ENCODE measurements at regions of chr18 and their contacts with region 1.

Region 1: GRCh38 chr18:76697441-76697901 is 124.9 kb upstream of the ZNF236 start:
- H3K4me3 ChIP-seq: no peak overlapping the region
- H3K27ac ChIP-seq: no peak overlapping the region
- H3K4me1 ChIP-seq: no peaks in the 10 kb centered on the region
- CTCF ChIP-seq: no peak

Region 2: GRCh38 chr18:76679259-76679658 is 18.2 kb before region 1 on chr18:
- CTCF ChIA-PET with region 1: interaction called, 3 read pairs
- POLR2A ChIA-PET with region 1: interaction called, 12 read pairs
- H3K4me3 ChIP-seq: no peak overlapping the region
- H3K27ac ChIP-seq: no peak overlapping the region
- H3K4me1 ChIP-seq: no peaks in the 10 kb centered on the region
- CTCF ChIP-seq: no peak

Region 3: DNA sequence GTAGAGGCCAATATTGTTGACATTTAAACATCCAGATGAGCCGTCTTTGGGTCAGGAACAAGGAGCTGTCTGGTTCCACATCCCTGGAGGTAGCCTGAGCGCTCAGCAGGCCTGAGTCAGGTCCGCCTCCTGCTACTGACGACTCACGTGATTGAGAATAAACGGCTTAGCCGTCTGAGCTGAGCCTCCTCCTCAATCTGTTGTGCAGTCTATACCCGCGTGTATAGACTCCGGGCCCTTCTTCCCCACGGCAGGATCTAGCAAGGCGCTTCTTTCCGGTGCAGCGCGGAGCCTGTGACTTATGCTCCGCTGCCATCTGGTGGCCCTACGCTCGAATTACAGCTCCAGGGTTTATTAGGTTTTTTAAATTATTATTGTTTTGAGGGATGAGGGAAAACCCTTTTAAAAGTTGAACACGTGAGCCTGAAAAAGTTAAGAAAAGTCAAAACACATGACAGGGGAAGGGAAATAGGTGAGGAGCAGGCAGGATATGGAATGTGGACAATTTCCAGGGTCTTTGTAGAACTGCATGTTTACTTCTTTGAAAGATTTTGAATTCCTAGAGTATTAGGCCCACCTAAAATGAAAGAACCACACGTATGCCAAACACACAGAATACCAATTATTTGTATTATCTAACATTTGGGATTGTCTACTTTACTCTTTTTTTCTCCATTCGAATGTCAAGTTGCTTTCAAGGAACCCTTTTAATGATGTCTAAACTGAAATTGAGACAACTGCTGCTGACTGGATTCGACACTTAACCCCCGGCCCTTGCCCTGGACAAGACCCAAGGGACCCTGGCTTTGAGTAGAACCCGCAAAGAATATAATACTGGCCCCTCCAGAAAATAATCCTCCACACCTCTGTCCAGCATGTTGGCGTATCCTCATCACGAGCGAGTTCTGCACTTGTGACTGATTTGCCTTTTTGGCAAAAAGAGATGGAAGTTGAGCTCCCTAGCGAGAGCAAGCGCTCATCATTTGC is 12.5 kb after region 1 on chr18:
- CTCF ChIA-PET with region 1: interaction called, 13 read pairs
- POLR2A ChIA-PET with region 1: no interaction called
- H3K4me3 ChIP-seq: no peak overlapping the region
- H3K27ac ChIP-seq: no peak overlapping the region
- H3K4me1 ChIP-seq: no peaks in the 10 kb centered on the region
- CTCF ChIP-seq: peak; percentile 72